IMR-90 (cell line): ENCODE measurements at regions of chr20 and their contacts with region 1.

Region 1: GRCh38 chr20:56788040-56788983 is 159.2 kb downstream of the TFAP2C start:
- DNase-seq: peak; percentile 95
- ATAC-seq: peak; percentile 82
- H3K4me3 ChIP-seq: no peak overlapping the region
- H3K27ac ChIP-seq: peak overlapping the region; percentile 71
- H3K4me1 ChIP-seq: peaks cover 2% of the 10 kb centered on the region; the same call in 1 of the 2 replicates
- H3K27me3 ChIP-seq: no peaks in the 10 kb centered on the region
- CTCF ChIP-seq: no peak
- POLR2A ChIP-seq: no peak
- RAD21 ChIP-seq: no peak

Region 2: GRCh38 chr20:56358596-56359211 is 429.6 kb before region 1 on chr20 and contains the start of gene FAM210B:
- CTCF ChIA-PET with region 1: no interaction called
- POLR2A ChIA-PET with region 1: no interaction called
- dilution Hi-C with region 1: no loop called
- in situ Hi-C with region 1: loop called (anchors 25 kb)
- intact Hi-C with region 1: no loop called
- DNase-seq: peak; percentile 87
- ATAC-seq: peak; percentile 99
- H3K4me3 ChIP-seq: peak within 1 kb of the TSS; percentile 77
- H3K27ac ChIP-seq: peak within 1 kb of the TSS; percentile 51
- H3K4me1 ChIP-seq: peaks cover 8% of the 10 kb centered on the region
- H3K27me3 ChIP-seq: no peaks in the 10 kb centered on the region
- CTCF ChIP-seq: no peak
- POLR2A ChIP-seq: no peak
- RAD21 ChIP-seq: no peak
- total RNA-seq, gene FAM210B: 45.0 and 48.9 TPM in 2 replicates

Region 3: DNA sequence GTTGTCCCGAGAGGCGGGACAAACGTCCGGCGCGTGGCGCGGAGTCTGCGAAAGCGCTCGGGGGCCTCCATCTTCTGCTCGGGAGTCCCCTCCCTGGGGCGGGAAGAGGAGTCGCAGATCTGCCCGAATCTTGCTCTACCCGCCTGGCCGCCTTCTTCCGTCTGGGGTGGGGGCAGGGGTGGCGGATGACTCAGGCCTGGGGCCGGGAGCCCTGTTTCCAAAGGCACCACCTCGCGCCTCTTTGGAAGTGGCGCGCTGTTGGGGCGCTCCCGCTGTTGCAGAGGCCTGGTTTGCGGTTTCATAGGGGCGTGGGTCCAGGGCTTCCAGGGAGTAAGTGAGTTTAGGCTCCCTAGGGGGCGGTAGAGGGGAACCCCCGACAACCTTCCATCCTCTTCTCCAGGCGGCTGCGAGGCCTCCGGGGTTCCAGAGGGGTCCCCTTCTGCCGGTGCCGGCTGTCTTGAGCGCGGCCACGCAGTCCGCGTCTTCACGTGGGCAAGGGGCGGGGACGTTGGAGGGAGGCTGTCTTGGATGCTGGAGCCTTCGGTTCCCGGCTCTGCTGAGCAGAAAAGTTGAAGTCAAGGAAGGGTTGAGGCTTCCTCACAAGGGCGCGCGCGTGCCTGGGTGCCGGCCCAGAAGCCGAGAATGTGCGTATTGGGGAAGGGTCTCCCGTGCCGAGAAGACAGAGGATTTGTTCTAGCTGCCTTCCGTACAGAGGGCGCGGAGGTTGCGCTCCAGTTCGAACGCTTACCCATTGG is 161.8 kb before region 1 on chr20:
- CTCF ChIA-PET with region 1: no interaction called
- POLR2A ChIA-PET with region 1: no interaction called
- dilution Hi-C with region 1: no loop called
- in situ Hi-C with region 1: no loop called
- intact Hi-C with region 1: no loop called
- DNase-seq: no peak
- ATAC-seq: no peak
- H3K4me3 ChIP-seq: no peak overlapping the region
- H3K27ac ChIP-seq: no peak overlapping the region
- H3K4me1 ChIP-seq: no peaks in the 10 kb centered on the region; the same call in 1 of the 2 replicates
- H3K27me3 ChIP-seq: peaks cover 77% of the 10 kb centered on the region
- CTCF ChIP-seq: no peak
- POLR2A ChIP-seq: no peak
- RAD21 ChIP-seq: no peak